T-cell (primary cell): ENCODE measurements at regions of chr9 and their contacts with region 1.

Region 1: DNA sequence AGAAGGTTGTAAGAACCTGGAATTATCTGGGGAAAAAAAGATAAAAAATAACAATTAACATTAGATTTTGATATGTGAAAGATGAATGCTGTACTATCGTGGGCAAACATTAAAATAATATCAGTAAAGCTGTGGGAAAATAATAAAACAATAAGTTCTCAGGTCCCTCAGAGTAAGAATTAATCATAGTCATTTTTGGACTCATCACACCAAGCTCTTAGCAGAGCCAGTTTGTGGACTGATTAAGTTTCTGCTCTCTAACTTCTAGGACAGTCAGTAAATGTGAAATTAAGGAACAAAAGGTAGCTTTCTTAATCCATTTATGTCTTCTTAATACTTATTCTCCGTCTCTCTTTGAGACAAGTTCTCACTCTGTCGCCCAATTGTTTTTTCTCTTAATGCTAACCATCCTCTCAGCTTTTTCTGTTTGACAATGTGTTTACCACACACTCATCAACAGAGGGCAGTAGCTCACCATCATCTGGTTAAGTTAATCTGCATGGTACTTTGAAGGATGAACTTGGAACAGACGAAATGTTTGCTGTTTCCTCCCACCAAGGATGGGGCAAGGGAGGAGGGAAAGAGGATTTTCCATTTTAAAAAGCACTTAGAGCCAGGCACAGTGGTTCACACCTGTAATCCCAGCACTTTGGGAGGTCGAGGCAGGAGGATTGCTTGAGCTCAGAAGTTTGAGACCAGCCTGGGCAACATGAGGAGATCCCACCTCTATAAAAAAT is 5.3 kb upstream of the ACO1 start:
- DNase-seq: peak in 28 of 35 experiments; percentile 7 to 87 (median 39)
- ATAC-seq: peak; percentile 74 to 82 (median 80)
- H3K4me3 ChIP-seq: no peak overlapping the region
- H3K4me3 Mint-ChIP-seq: no peak overlapping the region
- H3K27ac ChIP-seq: no peak overlapping the region
- H3K27ac Mint-ChIP-seq: peak overlapping the region; percentile 23 to 25
- H3K4me1 ChIP-seq: peaks cover 0 to 10% of the 10 kb centered on the region in 2 experiments
- H3K4me1 Mint-ChIP-seq: peaks cover 14 to 16% (median 15%) of the 10 kb centered on the region in 3 donors
- H3K27me3 ChIP-seq: peaks cover 5 to 7% of the 10 kb centered on the region in 2 experiments
- H3K27me3 Mint-ChIP-seq: peaks cover 10 to 11% of the 10 kb centered on the region in 2 donors

Region 2: GRCh38 chr9:32265037-32265436 is 114.1 kb before region 1 on chr9:
- CTCF ChIA-PET with region 1: no interaction called
- POLR2A ChIA-PET with region 1: no interaction called
- DNase-seq: no peak
- ATAC-seq: no peak
- H3K4me3 ChIP-seq: no peak overlapping the region
- H3K4me3 Mint-ChIP-seq: no peak overlapping the region
- H3K27ac ChIP-seq: no peak overlapping the region
- H3K27ac Mint-ChIP-seq: no peak overlapping the region
- H3K4me1 ChIP-seq: no peaks in the 10 kb centered on the region
- H3K4me1 Mint-ChIP-seq: no peaks in the 10 kb centered on the region
- H3K27me3 ChIP-seq: no peaks in the 10 kb centered on the region
- H3K27me3 Mint-ChIP-seq: peaks cover 4 to 8% of the 10 kb centered on the region in 2 donors

Region 3: GRCh38 chr9:32431940-32432555 is 52.9 kb after region 1 on chr9:
- CTCF ChIA-PET with region 1: interaction called, 21 read pairs
- POLR2A ChIA-PET with region 1: no interaction called
- DNase-seq: peak in 29 of 35 experiments; percentile 2 to 59 (median 16)
- ATAC-seq: peak in 3 of 4 experiments; percentile 38 to 58 (median 39)
- H3K4me3 ChIP-seq: no peak overlapping the region
- H3K4me3 Mint-ChIP-seq: no peak overlapping the region
- H3K27ac ChIP-seq: no peak overlapping the region
- H3K27ac Mint-ChIP-seq: no peak overlapping the region
- H3K4me1 ChIP-seq: no peaks in the 10 kb centered on the region
- H3K4me1 Mint-ChIP-seq: peaks cover 0 to 4% (median 0%) of the 10 kb centered on the region in 3 donors
- H3K27me3 ChIP-seq: no peaks in the 10 kb centered on the region
- H3K27me3 Mint-ChIP-seq: no peaks in the 10 kb centered on the region

Region 4: DNA sequence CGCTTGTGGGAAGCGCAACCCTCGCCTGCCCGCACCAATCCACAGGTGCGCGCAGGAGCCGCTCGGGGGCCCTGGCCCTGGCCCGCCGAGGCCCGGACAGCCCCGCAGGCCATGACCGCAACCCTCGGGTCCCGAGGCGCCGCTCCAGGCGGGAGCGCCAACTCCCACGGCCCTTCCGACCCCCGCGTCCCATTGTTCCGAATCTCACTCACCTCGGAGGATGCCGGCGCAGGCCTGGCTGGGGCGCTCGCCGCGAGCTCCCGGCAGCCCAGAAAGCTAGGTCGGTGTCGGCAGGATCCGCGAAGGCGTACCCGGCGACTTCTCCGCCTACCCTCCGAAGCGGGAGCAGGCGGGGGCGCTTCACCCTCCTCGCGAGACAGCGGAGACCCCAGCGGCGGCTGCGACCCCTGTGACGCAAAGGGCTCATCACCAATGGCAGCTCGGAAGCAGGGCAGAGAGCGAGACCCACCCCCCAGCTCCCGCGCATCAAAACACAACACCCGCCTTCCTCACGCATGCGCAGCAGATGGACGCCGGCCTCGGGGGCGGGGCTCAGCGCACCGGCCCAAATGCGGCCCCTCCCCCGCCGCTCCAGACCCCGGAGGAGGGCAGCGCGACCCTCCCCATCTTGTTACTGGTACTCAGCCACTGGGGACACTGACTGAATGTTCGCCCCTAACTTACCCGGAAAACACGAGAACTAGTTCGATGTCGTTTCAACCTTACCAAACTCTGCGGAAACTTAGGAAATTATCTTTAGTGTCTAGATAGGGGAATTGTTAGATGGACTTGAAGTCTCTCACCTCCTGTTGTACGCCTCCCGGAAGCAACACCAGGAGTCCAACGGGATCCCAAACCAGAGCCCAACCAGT is 171.6 kb after region 1 on chr9:
- CTCF ChIA-PET with region 1: interaction called, 3 to 20 read pairs
- POLR2A ChIA-PET with region 1: interaction called in 1 of 2 experiments, 3 read pairs
- DNase-seq: peak; percentile 86 to 99 (median 97)
- ATAC-seq: peak; percentile 82 to 87 (median 85)
- H3K4me3 ChIP-seq: peak overlapping the region; percentile 89 to 91
- H3K4me3 Mint-ChIP-seq: peak overlapping the region; percentile 91 to 98 (median 97)
- H3K27ac ChIP-seq: peak overlapping the region; percentile 99
- H3K27ac Mint-ChIP-seq: peak overlapping the region; percentile 99 to 100
- H3K4me1 ChIP-seq: peaks cover 13 to 24% of the 10 kb centered on the region in 2 experiments
- H3K4me1 Mint-ChIP-seq: peaks cover 57 to 65% (median 59%) of the 10 kb centered on the region in 3 donors
- H3K27me3 ChIP-seq: no peaks in the 10 kb centered on the region
- H3K27me3 Mint-ChIP-seq: no peaks in the 10 kb centered on the region

Region 5: DNA sequence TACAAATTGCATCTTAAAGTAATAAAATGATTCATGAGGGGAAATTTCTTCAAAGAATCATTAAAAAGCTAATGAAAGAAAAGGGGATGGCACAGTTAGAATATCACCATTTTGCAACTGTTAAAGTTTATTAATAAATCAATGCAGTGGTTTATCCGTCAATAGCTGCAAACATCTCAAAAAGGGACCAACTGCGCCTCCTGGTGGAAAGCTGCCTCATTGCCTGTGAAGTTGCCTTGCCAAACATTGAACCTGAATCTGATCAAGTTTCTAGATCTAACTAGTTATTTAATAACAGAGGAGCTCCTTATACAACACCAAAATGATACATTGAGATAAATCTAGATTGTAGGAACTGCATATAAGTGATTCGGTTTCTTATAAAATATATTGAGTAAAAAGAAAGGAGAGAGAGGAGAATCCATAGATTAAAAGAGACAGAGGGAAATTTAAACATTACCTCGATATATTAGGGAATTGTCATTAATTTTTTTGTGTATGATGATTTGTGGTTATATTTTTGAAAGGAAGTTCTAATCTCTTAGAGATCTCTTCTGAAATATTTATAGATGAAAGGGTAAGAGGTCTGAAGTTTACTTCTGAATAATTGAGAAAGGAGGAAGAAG is 200.7 kb after region 1 on chr9:
- CTCF ChIA-PET with region 1: interaction called, 201 to 338 read pairs
- POLR2A ChIA-PET with region 1: interaction called, 4 to 7 read pairs
- DNase-seq: peak; percentile 46 to 88 (median 75)
- ATAC-seq: peak; percentile 59 to 74 (median 64)
- H3K4me3 ChIP-seq: no peak overlapping the region
- H3K4me3 Mint-ChIP-seq: no peak overlapping the region
- H3K27ac ChIP-seq: no peak overlapping the region
- H3K27ac Mint-ChIP-seq: no peak overlapping the region
- H3K4me1 ChIP-seq: no peaks in the 10 kb centered on the region
- H3K4me1 Mint-ChIP-seq: peaks cover 0 to 3% (median 0%) of the 10 kb centered on the region in 3 donors
- H3K27me3 ChIP-seq: peaks cover 0 to 3% of the 10 kb centered on the region in 2 experiments
- H3K27me3 Mint-ChIP-seq: peaks cover 7 to 22% of the 10 kb centered on the region in 2 donors

Region 6: DNA sequence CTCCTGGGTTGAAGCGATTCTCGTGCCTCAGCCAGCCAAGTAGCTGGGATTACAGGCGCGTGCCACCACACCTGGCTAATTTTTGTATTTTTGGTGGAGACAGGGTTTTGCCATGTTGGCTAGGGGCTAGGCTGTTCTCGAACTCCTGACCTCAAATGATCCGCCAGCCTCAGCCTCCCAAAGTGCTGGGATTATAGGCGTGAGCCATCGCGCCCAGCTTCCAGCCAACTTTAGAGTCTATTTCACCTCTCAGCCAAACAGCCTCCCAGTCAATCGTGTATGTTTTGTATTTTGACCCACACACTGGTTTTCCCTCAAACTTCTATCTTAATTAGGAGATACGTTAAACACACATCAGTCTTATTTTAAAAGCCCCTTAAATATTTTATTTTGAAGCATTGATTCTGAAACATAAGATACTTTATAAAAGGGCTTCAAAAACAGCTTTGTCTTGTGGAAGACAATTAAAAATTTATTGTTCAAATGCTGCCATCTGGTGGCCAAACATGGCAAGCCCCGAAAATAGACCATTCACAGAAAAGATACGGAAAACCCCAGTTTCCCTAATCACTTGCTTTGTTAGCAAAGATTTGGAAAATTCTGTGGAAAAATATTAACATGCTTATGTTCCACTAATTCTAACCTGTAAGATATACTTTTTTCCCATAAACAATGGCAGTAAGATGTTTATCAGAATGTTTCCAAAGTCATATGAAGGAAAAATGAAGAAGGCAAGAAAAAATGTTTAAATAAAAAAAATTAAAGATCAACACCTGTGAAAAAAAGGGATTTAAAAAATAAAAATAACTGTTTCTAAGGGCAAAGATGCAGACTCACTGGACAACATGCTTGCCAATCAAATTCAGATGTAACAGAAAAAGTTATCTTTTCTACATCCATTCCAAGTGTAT is 589.2 kb after region 1 on chr9:
- CTCF ChIA-PET with region 1: interaction called, 17 to 60 read pairs
- POLR2A ChIA-PET with region 1: interaction called in 1 of 2 experiments, 3 read pairs
- DNase-seq: peak in 30 of 35 experiments; percentile 11 to 70 (median 40)
- ATAC-seq: no peak
- H3K4me3 ChIP-seq: no peak overlapping the region
- H3K4me3 Mint-ChIP-seq: no peak overlapping the region
- H3K27ac ChIP-seq: no peak overlapping the region
- H3K27ac Mint-ChIP-seq: no peak overlapping the region
- H3K4me1 ChIP-seq: no peaks in the 10 kb centered on the region
- H3K4me1 Mint-ChIP-seq: peaks cover 0 to 2% (median 2%) of the 10 kb centered on the region in 3 donors
- H3K27me3 ChIP-seq: no peaks in the 10 kb centered on the region
- H3K27me3 Mint-ChIP-seq: no peaks in the 10 kb centered on the region